Caco-2 (cell line): ENCODE measurements at regions of chr15 and their contacts with region 1.

Region 1: DNA sequence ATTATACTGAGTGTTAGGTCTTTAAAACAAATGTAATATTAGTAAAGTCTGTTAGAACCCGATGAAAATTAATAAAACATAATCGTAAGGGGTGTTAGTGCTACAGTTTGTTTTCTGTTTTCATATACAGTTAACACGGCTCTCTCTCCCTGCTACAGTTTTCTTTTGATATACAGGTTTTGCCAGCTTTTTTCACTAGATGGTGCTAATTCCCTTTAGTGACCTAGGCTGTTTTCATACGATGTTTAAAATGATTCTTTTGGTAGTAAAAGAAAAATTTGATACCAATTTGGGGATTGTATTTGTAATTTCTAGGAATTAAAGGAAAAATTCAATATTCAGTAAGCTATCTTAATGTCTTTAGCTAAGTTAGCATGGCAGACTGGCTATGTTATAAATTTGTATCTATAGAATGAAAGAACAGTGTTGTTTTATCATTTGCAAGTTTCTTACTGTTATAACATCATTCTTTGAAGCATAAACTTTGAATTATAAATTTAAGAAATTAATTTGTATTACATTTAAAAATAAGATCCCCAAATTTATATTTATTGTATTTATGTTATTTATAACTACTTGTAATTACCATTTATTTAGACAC is 11.5 kb downstream of the APH1B start:
- DNase-seq: peak in 1 of 2 experiments; percentile 52
- H3K4me3 ChIP-seq: no peak overlapping the region
- H3K4me3 Mint-ChIP-seq: no peak overlapping the region
- H3K27ac Mint-ChIP-seq: no peak overlapping the region
- H3K4me1 ChIP-seq: no peaks in the 10 kb centered on the region
- H3K4me1 Mint-ChIP-seq: peaks cover 6% of the 10 kb centered on the region
- H3K27me3 ChIP-seq: no peaks in the 10 kb centered on the region
- H3K27me3 Mint-ChIP-seq: no peaks in the 10 kb centered on the region
- CTCF ChIP-seq: peak; percentile 50 to 57

Region 2: GRCh38 chr15:63402498-63403253 is 113.8 kb after region 1 on chr15:
- CTCF ChIA-PET with region 1: interaction called, 10 read pairs
- POLR2A ChIA-PET with region 1: no interaction called
- intact Hi-C with region 1: loop called (anchors 1 kb)
- DNase-seq: peak in 1 of 2 experiments; percentile 32
- H3K4me3 ChIP-seq: no peak overlapping the region
- H3K4me3 Mint-ChIP-seq: no peak overlapping the region
- H3K27ac Mint-ChIP-seq: no peak overlapping the region
- H3K4me1 ChIP-seq: no peaks in the 10 kb centered on the region
- H3K4me1 Mint-ChIP-seq: no peaks in the 10 kb centered on the region
- H3K27me3 ChIP-seq: no peaks in the 10 kb centered on the region
- H3K27me3 Mint-ChIP-seq: no peaks in the 10 kb centered on the region
- CTCF ChIP-seq: peak; percentile 54 to 65

Region 3: GRCh38 chr15:63461230-63461985 is 172.5 kb after region 1 on chr15:
- CTCF ChIA-PET with region 1: interaction called, 5 read pairs
- POLR2A ChIA-PET with region 1: no interaction called
- intact Hi-C with region 1: loop called (anchors 1 kb)
- DNase-seq: peak; percentile 77 to 79
- H3K4me3 ChIP-seq: peak overlapping the region; percentile 41
- H3K4me3 Mint-ChIP-seq: peak overlapping the region; percentile 83
- H3K27ac Mint-ChIP-seq: peak overlapping the region; percentile 98
- H3K4me1 ChIP-seq: peaks cover 34% of the 10 kb centered on the region
- H3K4me1 Mint-ChIP-seq: peaks cover 28% of the 10 kb centered on the region
- H3K27me3 ChIP-seq: no peaks in the 10 kb centered on the region
- H3K27me3 Mint-ChIP-seq: no peaks in the 10 kb centered on the region
- CTCF ChIP-seq: peak in 1 of 2 experiments; percentile 65

Region 4: GRCh38 chr15:63466378-63467192 is 177.7 kb after region 1 on chr15:
- CTCF ChIA-PET with region 1: no interaction called
- POLR2A ChIA-PET with region 1: no interaction called
- intact Hi-C with region 1: loop called (anchors 1 kb)
- DNase-seq: peak; percentile 53 to 68
- H3K4me3 ChIP-seq: no peak overlapping the region
- H3K4me3 Mint-ChIP-seq: peak overlapping the region; percentile 51
- H3K27ac Mint-ChIP-seq: peak overlapping the region; percentile 35
- H3K4me1 ChIP-seq: peaks cover 31% of the 10 kb centered on the region
- H3K4me1 Mint-ChIP-seq: peaks cover 27% of the 10 kb centered on the region
- H3K27me3 ChIP-seq: no peaks in the 10 kb centered on the region
- H3K27me3 Mint-ChIP-seq: no peaks in the 10 kb centered on the region
- CTCF ChIP-seq: peak; percentile 55 to 60

Region 5: GRCh38 chr15:63712828-63713520 is 424.1 kb after region 1 on chr15:
- CTCF ChIA-PET with region 1: no interaction called
- POLR2A ChIA-PET with region 1: no interaction called
- intact Hi-C with region 1: no loop called
- DNase-seq: no peak
- H3K4me3 ChIP-seq: no peak overlapping the region
- H3K4me3 Mint-ChIP-seq: no peak overlapping the region
- H3K27ac Mint-ChIP-seq: no peak overlapping the region
- H3K4me1 ChIP-seq: peaks cover 14% of the 10 kb centered on the region
- H3K4me1 Mint-ChIP-seq: no peaks in the 10 kb centered on the region
- H3K27me3 ChIP-seq: no peaks in the 10 kb centered on the region
- H3K27me3 Mint-ChIP-seq: no peaks in the 10 kb centered on the region
- CTCF ChIP-seq: no peak